Activated CD8-positive, alpha-beta T cell treated with anti-CD3 and anti-CD28 coated beads, Interleukin-2, amount 10 ng/mL, durations not matched to agents 7 days and 5 days (primary cell): ENCODE measurements at regions of chr15 and their contacts with region 1.

Region 1: DNA sequence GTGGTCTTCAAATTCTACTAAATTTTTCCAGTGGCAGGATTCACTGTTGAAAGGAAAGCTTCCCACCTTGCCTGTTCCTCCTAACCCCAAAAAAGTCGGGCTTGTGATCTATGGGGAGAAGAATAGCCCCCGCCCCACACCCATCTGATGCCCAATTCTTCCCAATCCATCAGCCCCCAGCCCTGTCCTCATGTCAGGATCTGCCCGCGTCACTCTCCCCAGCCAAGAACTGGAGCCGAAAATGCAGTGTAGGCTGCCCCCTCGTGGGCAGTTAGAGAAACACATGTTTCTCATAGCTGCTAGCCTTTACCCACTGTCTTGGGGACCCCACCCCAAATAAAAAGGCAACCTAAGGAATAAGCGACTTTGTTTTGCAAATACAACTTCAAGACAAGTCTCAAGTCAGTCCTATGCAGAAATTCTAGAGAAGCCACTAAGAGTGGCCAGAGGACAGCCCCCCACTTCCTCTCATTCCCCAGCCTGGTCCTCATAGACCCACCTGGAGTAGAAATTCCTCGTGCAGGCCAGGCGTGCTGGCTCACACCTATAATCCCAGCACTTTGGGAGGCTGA is 13.0 kb upstream of the CSK start:
- DNase-seq: peak; percentile 76
- ATAC-seq: peak; percentile 48
- H3K4me3 Mint-ChIP-seq: no peak overlapping the region
- H3K27ac Mint-ChIP-seq: peak overlapping the region; percentile 27
- H3K4me1 Mint-ChIP-seq: peaks cover 27% of the 10 kb centered on the region
- H3K27me3 Mint-ChIP-seq: no peaks in the 10 kb centered on the region

Region 2: GRCh38 chr15:74565381-74566085 is 203.3 kb before region 1 on chr15:
- CTCF ChIA-PET with region 1: no interaction called
- POLR2A ChIA-PET with region 1: no interaction called
- DNase-seq: no peak
- ATAC-seq: no peak
- H3K4me3 Mint-ChIP-seq: no peak overlapping the region
- H3K27ac Mint-ChIP-seq: no peak overlapping the region
- H3K4me1 Mint-ChIP-seq: peaks cover 27% of the 10 kb centered on the region
- H3K27me3 Mint-ChIP-seq: no peaks in the 10 kb centered on the region

Region 3: GRCh38 chr15:74615508-74616365 is 153.1 kb before region 1 on chr15 and contains the start of gene CLK3:
- CTCF ChIA-PET with region 1: interaction called, 47 read pairs
- POLR2A ChIA-PET with region 1: interaction called, 4 read pairs
- DNase-seq: peak; percentile 96
- ATAC-seq: peak; percentile 82
- H3K4me3 Mint-ChIP-seq: peak within 1 kb of the TSS; percentile 98
- H3K27ac Mint-ChIP-seq: peak within 1 kb of the TSS; percentile 97
- H3K4me1 Mint-ChIP-seq: peaks cover 48% of the 10 kb centered on the region
- H3K27me3 Mint-ChIP-seq: no peaks in the 10 kb centered on the region
- total RNA-seq, gene CLK3: 125 to 128 TPM

Region 4: DNA sequence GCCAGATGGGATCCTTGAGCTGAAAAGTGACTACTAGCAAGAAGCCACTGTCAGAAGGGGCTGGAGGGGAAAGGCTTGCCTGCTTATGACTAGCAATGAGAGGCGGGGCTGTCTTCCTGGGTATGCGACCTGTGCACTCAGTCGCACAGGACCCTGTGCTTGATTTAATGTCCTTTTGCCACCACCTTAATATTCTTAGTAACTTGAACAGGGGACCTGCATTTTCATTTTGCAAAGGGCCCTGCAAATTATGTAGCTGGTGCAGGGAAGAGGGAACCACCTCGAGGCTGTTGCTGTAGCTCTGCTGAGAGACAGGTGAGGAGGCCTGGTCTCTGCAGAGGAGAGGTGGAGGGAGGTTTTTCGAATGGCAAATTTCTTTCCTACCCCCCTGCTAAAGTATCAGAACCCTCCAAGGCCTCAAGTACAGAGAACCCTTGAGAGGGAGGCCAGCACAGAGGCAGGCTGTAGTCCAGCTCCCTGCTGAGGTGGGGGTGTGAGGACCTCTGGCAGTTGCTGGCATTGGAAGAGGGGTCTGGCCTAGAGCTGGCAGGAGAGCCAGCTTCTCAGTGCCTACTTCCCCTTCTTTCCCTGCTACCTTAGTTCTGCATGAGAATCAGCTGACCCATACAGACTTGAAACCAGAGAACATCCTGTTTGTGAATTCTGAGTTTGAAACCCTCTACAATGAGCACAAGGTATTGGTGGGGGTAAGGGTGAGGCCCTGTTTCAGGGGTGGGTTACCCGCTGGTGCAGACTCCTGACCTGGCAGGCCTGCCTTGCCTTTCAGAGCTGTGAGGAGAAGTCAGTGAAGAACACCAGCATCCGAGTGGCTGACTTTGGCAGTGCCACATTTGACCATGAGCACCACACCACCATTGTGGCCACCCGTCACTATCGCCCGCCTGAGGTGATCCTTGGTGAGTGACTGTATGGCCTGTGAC is 141.8 kb before region 1 on chr15:
- CTCF ChIA-PET with region 1: interaction called, 508 read pairs
- POLR2A ChIA-PET with region 1: interaction called, 4 read pairs
- DNase-seq: no peak
- ATAC-seq: peak; percentile 22
- H3K4me3 Mint-ChIP-seq: peak overlapping the region; percentile 8
- H3K27ac Mint-ChIP-seq: peak overlapping the region; percentile 84
- H3K4me1 Mint-ChIP-seq: peaks cover 30% of the 10 kb centered on the region
- H3K27me3 Mint-ChIP-seq: no peaks in the 10 kb centered on the region

Region 5: DNA sequence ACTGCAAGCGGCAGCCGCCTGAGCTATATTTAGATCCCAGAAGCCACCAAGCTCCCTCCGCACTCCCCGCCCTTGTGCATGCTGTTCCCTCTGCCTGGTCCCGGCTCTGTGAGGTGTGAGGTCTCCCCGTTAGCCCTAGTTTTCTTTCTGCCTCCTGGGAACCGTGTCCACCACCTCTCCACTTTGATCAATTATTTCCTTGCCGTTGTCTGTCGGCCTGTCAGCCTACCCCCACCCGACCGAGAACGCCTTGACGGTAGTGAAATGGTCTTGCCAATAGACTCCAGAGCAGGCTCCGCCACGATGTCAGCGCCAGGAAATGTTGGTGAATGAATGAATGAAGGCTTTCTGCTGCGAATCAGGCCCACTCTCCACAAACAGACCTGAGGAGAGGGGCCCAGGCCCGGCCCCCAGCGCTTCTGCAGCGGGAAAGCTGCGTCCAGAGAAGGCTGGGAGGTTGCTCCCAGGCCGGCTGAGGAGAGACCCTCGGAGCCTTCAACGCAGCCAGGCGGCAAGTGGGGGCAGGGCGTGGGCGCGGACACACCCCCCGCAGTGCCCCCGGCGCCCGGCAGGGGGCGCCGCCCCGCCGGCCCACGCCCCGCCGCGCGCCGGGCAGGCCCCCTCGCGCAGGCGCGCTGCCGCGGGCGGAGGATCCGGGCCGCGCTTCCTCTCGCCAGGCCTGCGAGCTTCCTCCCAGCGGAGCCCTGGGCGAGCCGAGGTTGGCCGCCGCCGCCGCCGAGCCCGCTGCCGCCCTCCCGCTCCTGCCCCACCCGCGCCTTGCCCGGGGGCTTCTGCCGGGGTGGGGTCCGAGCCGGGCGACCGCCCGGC is 12.8 kb after region 1 on chr15 and contains the start of gene CSK:
- CTCF ChIA-PET with region 1: interaction called, 1,683 read pairs
- POLR2A ChIA-PET with region 1: interaction called, 670 read pairs
- DNase-seq: peak; percentile 82
- ATAC-seq: peak; percentile 59
- H3K4me3 Mint-ChIP-seq: peak within 1 kb of the TSS; percentile 95
- H3K27ac Mint-ChIP-seq: peak within 1 kb of the TSS; percentile 99
- H3K4me1 Mint-ChIP-seq: peaks cover 59% of the 10 kb centered on the region
- H3K27me3 Mint-ChIP-seq: no peaks in the 10 kb centered on the region
- total RNA-seq, gene CSK: 314 to 330 TPM

Region 6: DNA sequence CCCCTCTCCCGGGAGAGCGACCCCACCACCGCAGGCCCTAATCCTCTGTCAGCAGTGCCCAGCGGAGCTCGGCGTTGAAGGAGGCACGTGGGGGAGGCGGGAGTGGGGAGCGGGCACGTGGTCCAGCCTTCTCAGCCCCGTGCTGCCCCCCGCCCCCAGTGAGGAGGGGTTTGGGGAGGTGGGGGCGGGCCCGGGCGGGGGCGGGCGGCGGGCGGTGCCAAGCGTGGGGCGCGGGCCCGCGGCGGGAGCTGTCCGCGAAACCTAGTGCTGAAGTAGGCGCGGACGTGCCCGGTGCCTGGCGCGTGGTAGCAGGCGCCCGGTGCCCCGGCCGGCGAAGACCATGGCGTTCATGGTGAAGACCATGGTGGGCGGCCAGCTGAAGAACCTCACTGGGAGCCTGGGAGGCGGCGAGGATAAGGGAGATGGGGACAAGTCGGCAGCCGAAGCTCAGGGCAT is 57.5 kb after region 1 on chr15 and contains the start of gene CPLX3:
- CTCF ChIA-PET with region 1: interaction called, 18 read pairs
- POLR2A ChIA-PET with region 1: no interaction called
- DNase-seq: peak; percentile 67
- ATAC-seq: peak; percentile 66
- H3K4me3 Mint-ChIP-seq: no peak within 1 kb of the TSS
- H3K27ac Mint-ChIP-seq: no peak within 1 kb of the TSS
- H3K4me1 Mint-ChIP-seq: no peaks in the 10 kb centered on the region
- H3K27me3 Mint-ChIP-seq: peaks cover 23% of the 10 kb centered on the region
- total RNA-seq, gene CPLX3: not detected

Region 7: GRCh38 chr15:74873036-74873755 is 104.3 kb after region 1 on chr15 and contains the start of gene SCAMP2:
- CTCF ChIA-PET with region 1: interaction called, 14 read pairs
- POLR2A ChIA-PET with region 1: no interaction called
- DNase-seq: peak; percentile 95
- ATAC-seq: peak; percentile 96
- H3K4me3 Mint-ChIP-seq: peak within 1 kb of the TSS; percentile 99
- H3K27ac Mint-ChIP-seq: peak within 1 kb of the TSS; percentile 94
- H3K4me1 Mint-ChIP-seq: peaks cover 44% of the 10 kb centered on the region
- H3K27me3 Mint-ChIP-seq: peaks cover 6% of the 10 kb centered on the region
- total RNA-seq, gene SCAMP2: 96.9 to 105 TPM